WTC11 (cell line): ENCODE measurements at regions of chr10 and their contacts with region 1.

Region 1: GRCh38 chr10:119616882-119617570 is 20.3 kb upstream of the TIAL1 start:
- DNase-seq: peak; percentile 63
- ATAC-seq: peak; percentile 62
- H3K4me3 Mint-ChIP-seq: no peak overlapping the region
- H3K27ac Mint-ChIP-seq: no peak overlapping the region
- H3K4me1 Mint-ChIP-seq: peaks cover 14% of the 10 kb centered on the region
- H3K27me3 Mint-ChIP-seq: no peaks in the 10 kb centered on the region
- CTCF ChIP-seq: no peak

Region 2: GRCh38 chr10:119602241-119603095 is 14.6 kb before region 1 on chr10:
- CTCF ChIA-PET with region 1: interaction called, 10 read pairs
- POLR2A ChIA-PET with region 1: no interaction called
- DNase-seq: peak; percentile 73
- ATAC-seq: peak; percentile 98
- H3K4me3 Mint-ChIP-seq: no peak overlapping the region
- H3K27ac Mint-ChIP-seq: no peak overlapping the region
- H3K4me1 Mint-ChIP-seq: peaks cover 5% of the 10 kb centered on the region
- H3K27me3 Mint-ChIP-seq: peaks cover 3% of the 10 kb centered on the region; the same call in 1 of the 2 replicates
- CTCF ChIP-seq: 0 out of 2 replicates have a peak, but pooled peaks have one; percentile 39

Region 3: GRCh38 chr10:119644205-119644814 is 27.3 kb after region 1 on chr10:
- CTCF ChIA-PET with region 1: interaction called, 11 read pairs
- POLR2A ChIA-PET with region 1: no interaction called
- DNase-seq: peak; percentile 78
- ATAC-seq: peak; percentile 99
- H3K4me3 Mint-ChIP-seq: no peak overlapping the region
- H3K27ac Mint-ChIP-seq: no peak overlapping the region
- H3K4me1 Mint-ChIP-seq: peaks cover 7% of the 10 kb centered on the region; the same call in 1 of the 2 replicates
- H3K27me3 Mint-ChIP-seq: no peaks in the 10 kb centered on the region; the same call in 1 of the 2 replicates
- CTCF ChIP-seq: peak; percentile 29; the same call in 1 of the 2 replicates